ENCODE measurements at regions of chrX and their contacts with region 1.

Region 1: DNA sequence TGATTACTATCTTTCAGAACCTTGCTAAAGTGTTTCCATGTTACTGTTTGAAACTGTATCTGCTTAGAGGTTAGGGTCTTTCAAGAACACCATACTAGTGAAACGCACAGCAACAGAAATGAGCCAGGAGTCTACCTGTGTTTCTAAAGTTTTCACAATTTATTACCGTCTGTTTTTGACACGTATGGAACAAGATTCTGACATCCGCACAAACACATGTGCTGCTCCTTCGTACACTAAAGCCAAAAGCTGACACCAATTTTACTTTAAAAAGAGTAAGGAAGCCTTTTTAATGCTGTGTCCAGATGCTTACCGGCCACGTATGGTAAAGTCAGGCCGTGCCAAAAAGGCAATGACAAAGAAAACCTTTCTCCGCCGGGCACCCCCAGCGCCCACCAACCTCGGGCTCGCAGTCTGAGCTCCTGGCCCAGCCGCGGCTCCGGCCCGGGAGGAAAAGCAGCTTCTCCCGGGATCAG is 532 bp downstream of the RPS4X start:
- DNase-seq: no peak
- H3K4me3 Mint-ChIP-seq: peak overlapping the region; percentile 82
- H3K27ac Mint-ChIP-seq: peak overlapping the region; percentile 89
- H3K4me1 Mint-ChIP-seq: peaks cover 40% of the 10 kb centered on the region
- H3K27me3 Mint-ChIP-seq: peaks cover 6% of the 10 kb centered on the region

Region 2: DNA sequence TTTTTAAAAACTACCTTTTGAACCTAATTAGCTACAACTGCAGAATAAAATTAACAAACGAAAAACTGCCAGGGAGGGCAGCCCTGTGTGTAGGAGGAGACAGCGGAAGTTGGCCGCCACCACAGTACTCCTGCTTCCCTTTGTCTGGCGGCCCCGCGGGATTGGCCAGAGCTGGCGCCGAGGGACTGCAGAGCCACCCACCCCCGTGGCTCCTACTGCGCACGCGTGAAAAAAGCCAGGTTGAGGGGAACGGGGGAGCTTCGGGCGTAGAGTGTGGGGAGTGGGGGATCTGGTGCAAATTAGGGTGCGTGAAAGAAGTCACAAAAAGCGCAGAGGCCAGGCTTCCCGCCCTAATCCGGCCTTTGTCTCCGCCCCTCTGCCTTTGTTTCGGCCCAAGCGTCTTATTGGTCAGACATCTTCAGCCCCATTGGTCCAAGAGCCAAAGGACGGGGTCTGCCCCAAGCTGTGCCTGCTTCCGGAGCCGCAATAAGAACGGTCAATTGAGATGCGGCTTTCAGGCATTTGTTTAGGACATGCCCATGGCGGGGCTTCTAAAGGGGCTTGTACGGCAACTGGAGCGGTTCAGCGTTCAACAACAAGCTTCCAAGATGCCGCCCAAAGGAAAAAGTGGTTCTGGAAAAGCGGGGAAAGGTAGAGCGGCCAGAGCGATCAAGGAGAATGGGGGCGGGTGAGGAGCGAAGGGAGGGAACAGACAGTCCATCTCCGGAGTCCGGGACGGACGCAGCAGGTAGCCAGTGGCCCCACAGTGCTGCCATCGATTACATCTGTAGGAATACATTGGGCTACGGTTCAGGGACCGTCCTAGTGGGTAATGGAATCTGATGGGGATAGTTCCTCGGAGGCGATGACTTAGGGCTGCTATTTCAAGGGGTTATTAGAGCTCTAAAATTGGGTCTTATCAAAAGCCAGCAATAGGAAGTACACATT is 95.1 kb before region 1 on chrX and contains the start of gene PIN4:
- CTCF ChIA-PET with region 1: interaction called, 6 read pairs
- POLR2A ChIA-PET with region 1: interaction called, 14 read pairs
- intact Hi-C with region 1: loop called (anchors 1 kb)
- DNase-seq: peak; percentile 90
- H3K4me3 Mint-ChIP-seq: no peak within 1 kb of the TSS
- H3K27ac Mint-ChIP-seq: peak within 1 kb of the TSS; percentile 60
- H3K4me1 Mint-ChIP-seq: peaks cover 11% of the 10 kb centered on the region
- H3K27me3 Mint-ChIP-seq: no peaks in the 10 kb centered on the region
- total RNA-seq, gene PIN4: 7.5 to 7.8 TPM

Region 3: DNA sequence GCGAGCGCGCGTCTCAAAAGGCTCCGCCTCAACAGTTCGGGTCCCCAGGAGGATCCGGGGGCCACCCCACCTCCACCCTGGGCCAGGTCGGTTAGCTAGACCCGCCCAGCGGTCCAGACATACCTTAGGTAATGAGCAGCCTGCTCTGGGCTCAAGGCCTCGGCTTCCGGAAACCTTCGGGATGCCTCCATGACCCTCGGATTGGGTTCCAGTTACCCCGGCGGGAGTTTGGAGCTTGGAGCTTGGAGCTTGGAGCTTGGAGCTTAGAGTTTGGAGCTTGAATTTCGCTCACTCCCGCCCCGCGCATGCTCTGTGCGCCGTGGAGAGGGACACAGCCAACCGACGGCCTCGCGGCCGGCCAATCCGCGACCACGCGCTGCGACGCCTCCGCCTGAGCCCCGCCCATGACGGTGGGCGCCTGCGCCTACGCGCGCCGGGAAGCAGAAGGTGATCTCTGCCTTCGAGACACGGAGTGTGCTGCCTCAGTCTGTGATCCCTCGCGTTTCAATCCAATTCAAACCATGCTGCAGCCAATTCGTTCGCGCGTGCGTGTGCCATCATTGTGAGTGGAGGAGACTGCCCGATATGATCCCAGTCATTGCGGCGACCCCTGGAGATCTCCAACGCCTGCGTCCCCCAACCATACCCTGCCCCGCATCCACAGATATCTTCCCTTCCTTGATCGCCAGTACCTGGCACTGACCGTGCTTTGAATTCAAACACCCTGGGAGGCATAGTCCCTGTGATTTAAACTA is 37.6 kb before region 1 on chrX and contains the start of gene ERCC6L:
- CTCF ChIA-PET with region 1: interaction called, 46 read pairs
- POLR2A ChIA-PET with region 1: interaction called, 9 read pairs
- intact Hi-C with region 1: loop called (anchors 2 kb)
- DNase-seq: peak; percentile 90
- H3K4me3 Mint-ChIP-seq: peak within 1 kb of the TSS; percentile 79
- H3K27ac Mint-ChIP-seq: peak within 1 kb of the TSS; percentile 70
- H3K4me1 Mint-ChIP-seq: peaks cover 13% of the 10 kb centered on the region
- H3K27me3 Mint-ChIP-seq: no peaks in the 10 kb centered on the region
- total RNA-seq, gene ERCC6L: 10.5 to 10.8 TPM

Region 4: DNA sequence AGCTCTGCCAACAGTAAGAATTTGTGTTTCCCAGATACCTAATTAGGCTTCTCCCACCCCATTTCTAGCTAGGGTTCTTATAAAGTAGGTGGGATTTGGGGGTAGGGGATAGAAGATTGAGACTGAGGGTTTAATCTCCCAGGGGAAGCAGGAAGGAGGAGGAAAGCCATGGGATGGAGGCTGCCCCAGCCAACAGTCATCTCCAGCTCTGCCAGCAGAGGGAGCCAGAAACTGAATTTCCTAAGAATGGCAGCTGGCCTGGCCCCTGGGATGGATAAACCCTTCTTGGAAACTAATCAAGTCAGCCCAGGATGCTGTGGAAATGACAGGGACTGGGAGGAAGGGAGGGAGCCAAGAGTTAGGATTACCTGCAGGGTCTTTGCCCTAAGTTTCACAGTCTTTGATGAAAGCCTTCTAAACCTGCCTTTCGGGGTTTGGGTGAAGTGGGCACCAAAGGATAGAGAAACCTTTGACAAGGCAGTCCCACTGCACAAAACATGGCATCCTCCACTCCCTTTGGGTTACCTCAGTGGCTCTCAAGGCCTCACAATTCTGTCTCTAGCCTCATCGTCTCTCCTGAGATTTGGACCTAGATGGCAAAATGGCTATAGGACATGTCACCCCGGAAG is 30.9 kb before region 1 on chrX:
- CTCF ChIA-PET with region 1: interaction called, 46 read pairs
- POLR2A ChIA-PET with region 1: interaction called, 11 read pairs
- intact Hi-C with region 1: no loop called
- DNase-seq: peak; percentile 58
- H3K4me3 Mint-ChIP-seq: no peak overlapping the region
- H3K27ac Mint-ChIP-seq: no peak overlapping the region
- H3K4me1 Mint-ChIP-seq: peaks cover 4% of the 10 kb centered on the region
- H3K27me3 Mint-ChIP-seq: no peaks in the 10 kb centered on the region

Region 5: DNA sequence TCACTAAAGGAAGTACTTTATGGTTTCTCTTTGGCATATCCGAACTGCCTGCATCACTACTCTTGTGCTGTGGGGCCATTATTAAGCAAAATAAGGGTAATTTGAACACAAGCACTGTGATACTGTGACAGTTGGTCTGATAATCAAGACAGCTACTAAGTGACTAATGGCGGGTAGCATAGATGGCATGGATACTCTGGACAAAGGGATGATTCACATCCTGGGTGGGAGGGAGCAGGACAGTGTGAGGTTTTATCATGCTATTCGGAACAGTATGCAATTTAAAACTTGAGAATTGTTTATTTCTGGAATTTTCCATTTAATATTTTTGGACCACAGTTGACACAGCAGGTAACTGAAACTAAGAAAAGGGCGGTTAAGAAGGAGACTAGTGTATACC is 81.8 kb after region 1 on chrX:
- CTCF ChIA-PET with region 1: no interaction called
- POLR2A ChIA-PET with region 1: no interaction called
- intact Hi-C with region 1: no loop called
- DNase-seq: no peak
- H3K4me3 Mint-ChIP-seq: no peak overlapping the region
- H3K27ac Mint-ChIP-seq: no peak overlapping the region
- H3K4me1 Mint-ChIP-seq: no peaks in the 10 kb centered on the region
- H3K27me3 Mint-ChIP-seq: no peaks in the 10 kb centered on the region

Region 6: DNA sequence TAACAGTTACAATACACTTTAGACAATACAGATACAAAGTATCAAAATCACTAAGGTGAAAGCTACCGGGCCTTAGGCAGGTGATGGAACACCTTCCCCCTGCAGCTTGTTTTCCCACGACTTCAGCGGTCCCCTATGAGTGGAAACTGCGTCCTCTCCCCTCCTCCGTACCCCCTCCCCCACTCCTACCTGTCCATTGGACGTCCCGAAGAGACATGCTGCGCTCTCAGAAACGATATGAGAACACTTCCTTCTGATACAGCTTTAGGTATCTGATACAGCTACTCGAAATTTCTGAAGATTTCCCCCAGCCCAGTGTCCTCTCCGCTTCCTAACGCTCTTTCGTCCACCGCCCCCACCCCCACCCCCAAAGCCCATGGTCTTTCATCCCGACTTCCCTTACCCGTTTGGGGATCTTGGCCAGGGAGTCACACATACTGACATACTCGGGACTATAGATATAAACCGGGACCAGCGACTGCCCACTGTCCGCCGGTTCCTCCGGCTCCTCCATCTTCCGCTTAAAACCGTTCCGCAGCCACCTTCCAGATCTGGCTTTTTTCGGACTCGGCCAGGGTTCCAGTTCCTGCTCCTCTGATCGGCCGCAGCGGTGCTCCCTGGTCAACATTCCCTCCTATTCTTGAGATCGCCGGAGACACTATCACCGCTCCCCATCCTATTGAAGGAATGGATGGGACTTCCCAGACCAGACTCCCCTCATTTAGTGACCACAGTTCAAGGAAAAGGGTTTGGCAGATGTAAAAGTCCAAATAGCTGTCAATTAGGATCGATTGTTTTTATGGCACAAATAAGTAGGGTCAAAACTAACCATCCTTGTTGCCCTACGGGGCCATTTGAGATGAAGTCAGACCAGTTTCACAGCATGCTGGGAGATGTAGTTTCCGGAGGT is 296.0 kb after region 1 on chrX and contains the start of gene HDAC8:
- CTCF ChIA-PET with region 1: interaction called, 3 read pairs
- POLR2A ChIA-PET with region 1: interaction called, 5 read pairs
- intact Hi-C with region 1: loop called (anchors 2 kb)
- DNase-seq: peak; percentile 52
- H3K4me3 Mint-ChIP-seq: peak within 1 kb of the TSS; percentile 89
- H3K27ac Mint-ChIP-seq: peak within 1 kb of the TSS; percentile 84
- H3K4me1 Mint-ChIP-seq: peaks cover 7% of the 10 kb centered on the region
- H3K27me3 Mint-ChIP-seq: no peaks in the 10 kb centered on the region
- total RNA-seq, gene HDAC8: 17.9 to 19.7 TPM

Region 7: DNA sequence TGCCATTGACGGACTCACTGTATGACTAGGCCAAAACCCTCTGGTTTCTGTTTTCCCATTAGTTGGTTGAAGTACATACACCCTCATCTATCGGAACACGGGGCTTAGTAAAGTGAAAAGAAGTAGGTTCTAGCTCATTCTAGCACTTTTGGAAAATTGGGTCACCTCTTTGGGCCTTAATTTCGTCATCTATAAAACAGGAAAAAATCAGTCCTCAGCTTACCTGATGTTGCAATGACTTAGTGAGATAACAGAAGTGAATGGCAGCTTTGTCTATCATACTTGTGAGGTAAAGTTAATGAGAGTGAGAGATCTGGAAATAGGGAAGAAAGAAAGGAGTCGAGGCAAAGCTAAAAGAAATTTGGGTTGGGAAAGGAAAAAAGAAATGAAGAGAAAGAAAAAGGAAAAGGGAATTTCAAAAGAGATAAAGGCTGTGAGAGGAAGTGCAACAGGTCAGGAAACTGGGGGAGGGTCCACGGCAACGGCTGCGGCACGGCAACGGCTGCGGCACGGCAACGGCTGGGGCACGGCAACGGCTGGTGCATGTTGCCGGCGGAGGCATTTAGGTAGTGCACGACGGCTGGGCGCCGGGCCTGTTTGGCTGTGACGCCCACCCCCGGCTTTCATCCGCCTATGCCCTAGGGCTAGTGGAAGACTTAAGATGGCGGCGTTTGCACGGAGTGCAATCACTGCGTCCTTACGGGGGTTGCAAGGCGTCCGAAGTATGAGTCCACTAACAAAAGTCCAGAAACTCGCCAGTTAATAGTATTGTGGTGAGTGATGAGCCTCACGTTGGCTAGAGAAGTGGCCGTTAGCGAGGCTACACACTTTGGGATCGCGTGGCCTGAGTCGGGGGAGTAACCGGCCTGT is 1667.4 kb after region 1 on chrX:
- CTCF ChIA-PET with region 1: no interaction called
- POLR2A ChIA-PET with region 1: no interaction called
- intact Hi-C with region 1: loop called (anchors 5 kb)
- DNase-seq: peak; percentile 89
- H3K4me3 Mint-ChIP-seq: peak overlapping the region; percentile 79
- H3K27ac Mint-ChIP-seq: peak overlapping the region; percentile 85
- H3K4me1 Mint-ChIP-seq: peaks cover 15% of the 10 kb centered on the region
- H3K27me3 Mint-ChIP-seq: no peaks in the 10 kb centered on the region

Measured in activated CD4-positive, alpha-beta memory T cell treated with anti-CD3 and anti-CD28 coated beads for 36 hours (primary cell).